A673 (cell line): ENCODE measurements at regions of chrX and their contacts with region 1.

Region 1: DNA sequence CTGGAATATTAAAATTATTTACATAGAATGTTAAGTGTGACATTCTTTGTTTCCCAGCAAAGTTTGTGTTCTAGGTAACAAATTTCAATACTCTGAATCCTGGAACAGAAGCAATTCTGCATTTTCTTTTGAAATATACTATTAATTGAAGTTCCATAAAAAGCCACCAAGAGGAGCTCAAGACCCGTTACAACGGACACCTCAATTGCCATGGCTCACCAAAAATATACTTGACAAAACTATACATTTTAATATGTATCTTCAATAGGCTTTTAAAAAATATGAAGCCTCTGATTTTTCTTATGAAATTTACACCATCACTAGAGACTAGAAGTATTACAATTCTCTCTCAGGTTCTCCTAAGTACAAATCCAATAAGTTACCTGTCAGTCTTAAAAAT is 111.4 kb downstream of the NYX start:
- DNase-seq: peak; percentile 44
- H3K4me3 ChIP-seq: no peak overlapping the region
- H3K27ac ChIP-seq: no peak overlapping the region
- H3K4me1 ChIP-seq: peaks cover 12% of the 10 kb centered on the region
- H3K27me3 ChIP-seq: no peaks in the 10 kb centered on the region
- CTCF ChIP-seq: peak; percentile 56

Region 2: GRCh38 chrX:41406211-41406610 is 152.3 kb before region 1 on chrX:
- CTCF ChIA-PET with region 1: no interaction called
- POLR2A ChIA-PET with region 1: no interaction called
- intact Hi-C with region 1: no loop called
- DNase-seq: no peak
- H3K4me3 ChIP-seq: no peak overlapping the region
- H3K27ac ChIP-seq: no peak overlapping the region
- H3K4me1 ChIP-seq: no peaks in the 10 kb centered on the region
- H3K27me3 ChIP-seq: no peaks in the 10 kb centered on the region
- CTCF ChIP-seq: no peak

Region 3: GRCh38 chrX:41734530-41734929 is 176.0 kb after region 1 on chrX:
- CTCF ChIA-PET with region 1: no interaction called
- POLR2A ChIA-PET with region 1: no interaction called
- intact Hi-C with region 1: loop called (anchors 10 kb)
- DNase-seq: peak; percentile 65
- H3K4me3 ChIP-seq: no peak overlapping the region
- H3K27ac ChIP-seq: no peak overlapping the region
- H3K4me1 ChIP-seq: no peaks in the 10 kb centered on the region
- H3K27me3 ChIP-seq: peaks cover 9% of the 10 kb centered on the region
- CTCF ChIP-seq: peak; percentile 57

Region 4: DNA sequence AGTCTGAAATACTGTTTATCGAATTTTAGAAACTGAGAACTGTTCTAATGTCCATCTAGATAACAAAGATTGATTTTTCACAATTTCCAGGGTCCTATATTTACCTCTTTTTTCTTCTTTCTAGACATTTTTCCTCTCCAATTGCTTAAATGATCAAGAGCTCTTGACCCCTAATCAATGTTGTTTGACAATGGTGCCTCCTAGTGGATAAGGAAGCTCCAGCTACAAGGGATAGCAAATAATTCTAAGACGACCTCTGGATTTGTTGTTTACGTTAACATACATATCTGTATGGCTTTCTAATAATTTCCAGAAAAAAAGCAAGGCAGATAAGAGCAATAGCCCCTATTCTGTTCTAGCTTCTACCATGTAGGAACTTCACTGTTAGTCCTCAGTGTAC is 201.3 kb after region 1 on chrX:
- CTCF ChIA-PET with region 1: interaction called, 7 read pairs
- POLR2A ChIA-PET with region 1: no interaction called
- intact Hi-C with region 1: loop called (anchors 2 kb)
- DNase-seq: peak; percentile 53
- H3K4me3 ChIP-seq: no peak overlapping the region
- H3K27ac ChIP-seq: no peak overlapping the region
- H3K4me1 ChIP-seq: no peaks in the 10 kb centered on the region
- H3K27me3 ChIP-seq: no peaks in the 10 kb centered on the region
- CTCF ChIP-seq: peak; percentile 71